Gastrocnemius medialis (tissue), 4 donors: ENCODE measurements at regions of chr3 and their contacts with region 1.

Region 1: GRCh38 chr3:15287565-15288330 is 44.6 kb downstream of the SH3BP5 start:
- DNase-seq: peak; percentile 80 to 89
- ATAC-seq: peak; percentile 94 to 97
- H3K4me3 ChIP-seq: no peak overlapping the region
- H3K27ac ChIP-seq: peak overlapping the region; percentile 76 to 81 (median 79)
- H3K4me1 ChIP-seq: peaks cover 57 to 61% of the 10 kb centered on the region in 2 donors
- H3K27me3 ChIP-seq: no peaks in the 10 kb centered on the region
- CTCF ChIP-seq: no peak
- POLR2A ChIP-seq: peak; percentile 60 to 72

Region 2: GRCh38 chr3:15092686-15093085 is 195.1 kb before region 1 on chr3:
- in situ Hi-C with region 1: no loop called
- intact Hi-C with region 1: no loop called
- DNase-seq: no peak
- ATAC-seq: no peak
- H3K4me3 ChIP-seq: no peak overlapping the region
- H3K27ac ChIP-seq: no peak overlapping the region
- H3K4me1 ChIP-seq: peaks cover 2 to 7% of the 10 kb centered on the region in 2 donors
- H3K27me3 ChIP-seq: no peaks in the 10 kb centered on the region
- CTCF ChIP-seq: no peak
- POLR2A ChIP-seq: no peak

Region 3: GRCh38 chr3:15325242-15325641 is 37.5 kb after region 1 on chr3:
- in situ Hi-C with region 1: no loop called
- intact Hi-C with region 1: loop called (anchors 2 kb)
- DNase-seq: peak in 1 of 2 donors; percentile 70
- ATAC-seq: peak in 1 of 2 donors; percentile 4
- H3K4me3 ChIP-seq: no peak overlapping the region
- H3K27ac ChIP-seq: peak overlapping the region; percentile 88 to 93 (median 91)
- H3K4me1 ChIP-seq: peaks cover 89 to 92% of the 10 kb centered on the region in 2 donors
- H3K27me3 ChIP-seq: no peaks in the 10 kb centered on the region
- CTCF ChIP-seq: no peak
- POLR2A ChIP-seq: no peak